CD8-positive, alpha-beta T cell (primary cell): ENCODE measurements at regions of chr11 and their contacts with region 1.

Region 1: GRCh38 chr11:10540923-10541560 is at the start of gene RNF141:
- DNase-seq: peak; percentile 89 to 98 (median 95)
- ATAC-seq: peak; percentile 98
- H3K4me3 ChIP-seq: peak within 1 kb of the TSS; percentile 78 to 83
- H3K4me3 Mint-ChIP-seq: peak within 1 kb of the TSS; percentile 91
- H3K27ac ChIP-seq: peak within 1 kb of the TSS; percentile 77 to 85
- H3K27ac Mint-ChIP-seq: peak within 1 kb of the TSS; percentile 89
- H3K4me1 ChIP-seq: peaks cover 13% of the 10 kb centered on the region
- H3K4me1 Mint-ChIP-seq: peaks cover 32% of the 10 kb centered on the region
- H3K27me3 ChIP-seq: no peaks in the 10 kb centered on the region
- H3K27me3 Mint-ChIP-seq: no peaks in the 10 kb centered on the region
- CTCF ChIP-seq: peak; percentile 85
- total RNA-seq, gene RNF141: 17.3 to 19.2 TPM

Region 2: DNA sequence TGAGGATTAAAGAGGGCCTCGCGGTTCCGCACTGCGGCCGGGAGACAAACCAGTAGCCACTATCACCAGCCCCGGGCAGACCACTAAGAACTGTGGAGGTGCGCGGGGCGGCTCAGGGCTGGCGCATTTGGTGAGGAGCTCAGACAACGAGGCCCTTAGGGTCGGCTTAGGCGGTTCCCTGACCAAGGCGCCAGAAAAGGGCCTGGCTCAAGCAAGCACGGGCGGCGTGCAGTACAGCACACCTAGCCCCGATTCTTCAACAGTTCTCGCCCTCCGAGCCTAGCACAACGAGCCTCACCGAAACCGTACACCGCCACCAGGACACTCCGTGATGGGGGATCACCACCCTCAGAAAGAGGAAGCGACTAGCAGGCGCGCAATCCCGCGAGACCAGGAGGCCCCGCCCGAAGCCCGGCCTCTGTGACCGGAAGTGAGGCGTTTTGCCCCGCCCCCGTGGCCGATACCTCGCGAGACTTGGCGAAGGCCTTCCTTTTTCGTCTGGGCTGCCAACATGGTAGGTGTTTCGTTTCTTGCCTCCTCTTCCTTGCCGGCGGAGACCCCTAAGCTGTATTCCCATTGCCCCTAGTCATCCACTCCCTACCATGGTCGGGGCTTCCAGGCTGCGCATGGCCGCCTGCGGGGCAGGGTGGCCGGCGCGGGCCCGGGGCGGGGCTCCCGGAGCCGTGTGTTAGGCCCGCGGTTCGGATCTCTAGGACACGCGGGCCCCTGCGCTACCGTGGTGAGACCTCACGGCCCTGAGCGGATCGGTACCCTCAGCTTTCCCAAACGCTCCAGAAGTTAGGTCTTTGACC is 1858.5 kb before region 1 on chr11 and contains the starts of genes RPL27A and TRIM66:
- CTCF ChIA-PET with region 1: no interaction called
- POLR2A ChIA-PET with region 1: no interaction called
- intact Hi-C with region 1: loop called in 1 of 2 experiments (anchors 5 kb)
- DNase-seq: peak; percentile 98 to 100 (median 99)
- ATAC-seq: peak; percentile 92
- H3K4me3 ChIP-seq: peak within 1 kb of the TSS; percentile 63 to 99
- H3K4me3 Mint-ChIP-seq: peak within 1 kb of the TSS; percentile 96
- H3K27ac ChIP-seq: peak within 1 kb of the TSS; percentile 82 to 92
- H3K27ac Mint-ChIP-seq: peak within 1 kb of the TSS; percentile 98
- H3K4me1 ChIP-seq: peaks cover 27% of the 10 kb centered on the region
- H3K4me1 Mint-ChIP-seq: peaks cover 48% of the 10 kb centered on the region
- H3K27me3 ChIP-seq: no peaks in the 10 kb centered on the region
- H3K27me3 Mint-ChIP-seq: no peaks in the 10 kb centered on the region
- CTCF ChIP-seq: no peak
- total RNA-seq, gene RPL27A: 1,595 to 1,676 TPM
- total RNA-seq, gene TRIM66: 8.6 to 9.1 TPM

Region 3: DNA sequence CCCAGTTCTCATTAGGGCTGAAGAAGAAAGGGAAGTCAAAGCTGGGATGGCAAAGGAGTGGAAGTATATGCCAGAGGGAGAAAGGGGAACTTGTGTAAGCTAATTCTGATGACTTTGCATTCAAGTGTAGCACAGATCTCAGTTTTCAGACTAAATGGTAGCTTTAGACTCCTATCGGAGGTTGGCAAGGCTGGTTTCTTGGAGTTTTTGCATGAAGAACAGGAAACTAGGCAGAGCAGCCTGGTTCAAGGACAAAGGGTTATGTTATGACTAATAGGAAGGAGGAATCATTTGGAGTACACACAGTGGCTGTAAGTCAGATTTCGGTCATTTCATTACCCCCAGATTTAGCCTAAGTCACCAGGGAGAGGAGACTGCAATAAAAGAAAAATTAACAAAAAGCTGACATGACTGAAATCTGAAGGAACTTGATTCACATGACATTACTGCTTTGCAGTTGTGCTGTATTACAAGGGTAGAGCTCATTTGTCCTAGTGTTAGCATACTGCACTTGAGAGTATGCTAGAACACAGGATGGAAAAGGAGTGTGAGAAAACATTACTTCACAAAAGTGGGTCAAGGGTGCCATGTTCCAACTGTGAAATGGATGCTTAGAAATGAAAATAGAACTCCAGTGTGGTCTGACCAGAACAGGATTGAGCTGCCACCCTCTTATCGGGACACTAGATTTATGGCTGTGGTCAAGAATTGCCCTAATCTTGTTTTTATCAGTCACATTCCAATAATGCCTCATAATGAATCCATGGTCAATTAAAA is 212.5 kb before region 1 on chr11:
- CTCF ChIA-PET with region 1: no interaction called
- POLR2A ChIA-PET with region 1: no interaction called
- intact Hi-C with region 1: no loop called
- DNase-seq: no peak
- ATAC-seq: no peak
- H3K4me3 ChIP-seq: no peak overlapping the region
- H3K4me3 Mint-ChIP-seq: no peak overlapping the region
- H3K27ac ChIP-seq: no peak overlapping the region
- H3K27ac Mint-ChIP-seq: no peak overlapping the region
- H3K4me1 ChIP-seq: no peaks in the 10 kb centered on the region
- H3K4me1 Mint-ChIP-seq: no peaks in the 10 kb centered on the region
- H3K27me3 ChIP-seq: peaks cover 0 to 5% of the 10 kb centered on the region in 2 experiments
- H3K27me3 Mint-ChIP-seq: peaks cover 13% of the 10 kb centered on the region
- CTCF ChIP-seq: no peak

Region 4: DNA sequence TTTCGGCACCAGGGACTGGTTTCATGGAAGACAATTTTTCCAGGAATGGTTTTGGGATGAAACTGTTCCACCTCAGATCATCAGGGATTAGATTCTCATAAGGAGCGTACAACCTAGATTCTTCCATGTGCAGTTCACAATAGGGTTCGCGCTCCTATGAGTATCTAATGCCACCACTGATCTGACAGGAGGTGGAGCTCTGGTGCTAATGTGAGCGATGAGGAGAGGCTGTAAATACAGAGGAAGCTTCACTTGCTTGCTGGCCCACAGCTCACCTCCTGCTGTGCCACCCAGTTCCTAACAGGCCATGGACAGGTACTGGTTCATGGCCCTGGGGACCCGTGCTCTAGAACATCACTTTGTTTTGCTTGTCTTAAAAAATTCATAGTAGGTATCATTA is 127.8 kb before region 1 on chr11:
- CTCF ChIA-PET with region 1: interaction called, 22 read pairs
- POLR2A ChIA-PET with region 1: interaction called, 5 read pairs
- intact Hi-C with region 1: loop called (anchors 2 kb)
- DNase-seq: peak in 8 of 9 experiments; percentile 20 to 81 (median 53)
- ATAC-seq: peak; percentile 93
- H3K4me3 ChIP-seq: no peak overlapping the region
- H3K4me3 Mint-ChIP-seq: no peak overlapping the region
- H3K27ac ChIP-seq: no peak overlapping the region
- H3K27ac Mint-ChIP-seq: no peak overlapping the region
- H3K4me1 ChIP-seq: peaks cover 29% of the 10 kb centered on the region
- H3K4me1 Mint-ChIP-seq: peaks cover 40% of the 10 kb centered on the region
- H3K27me3 ChIP-seq: no peaks in the 10 kb centered on the region
- H3K27me3 Mint-ChIP-seq: no peaks in the 10 kb centered on the region
- CTCF ChIP-seq: peak; percentile 51

Region 5: GRCh38 chr11:10450464-10451425 is 90.3 kb before region 1 on chr11:
- CTCF ChIA-PET with region 1: interaction called, 19 read pairs
- POLR2A ChIA-PET with region 1: interaction called, 11 read pairs
- intact Hi-C with region 1: loop called in 1 of 2 experiments (anchors 5 kb)
- DNase-seq: peak in 8 of 9 experiments; percentile 39 to 79 (median 58)
- ATAC-seq: peak; percentile 70
- H3K4me3 ChIP-seq: peak overlapping the region; percentile 47 to 59
- H3K4me3 Mint-ChIP-seq: peak overlapping the region; percentile 88
- H3K27ac ChIP-seq: peak overlapping the region; percentile 44 to 45
- H3K27ac Mint-ChIP-seq: peak overlapping the region; percentile 94
- H3K4me1 ChIP-seq: peaks cover 40% of the 10 kb centered on the region
- H3K4me1 Mint-ChIP-seq: peaks cover 62% of the 10 kb centered on the region
- H3K27me3 ChIP-seq: peaks cover 0 to 4% of the 10 kb centered on the region in 2 experiments
- H3K27me3 Mint-ChIP-seq: no peaks in the 10 kb centered on the region
- CTCF ChIP-seq: peak; percentile 52

Region 6: DNA sequence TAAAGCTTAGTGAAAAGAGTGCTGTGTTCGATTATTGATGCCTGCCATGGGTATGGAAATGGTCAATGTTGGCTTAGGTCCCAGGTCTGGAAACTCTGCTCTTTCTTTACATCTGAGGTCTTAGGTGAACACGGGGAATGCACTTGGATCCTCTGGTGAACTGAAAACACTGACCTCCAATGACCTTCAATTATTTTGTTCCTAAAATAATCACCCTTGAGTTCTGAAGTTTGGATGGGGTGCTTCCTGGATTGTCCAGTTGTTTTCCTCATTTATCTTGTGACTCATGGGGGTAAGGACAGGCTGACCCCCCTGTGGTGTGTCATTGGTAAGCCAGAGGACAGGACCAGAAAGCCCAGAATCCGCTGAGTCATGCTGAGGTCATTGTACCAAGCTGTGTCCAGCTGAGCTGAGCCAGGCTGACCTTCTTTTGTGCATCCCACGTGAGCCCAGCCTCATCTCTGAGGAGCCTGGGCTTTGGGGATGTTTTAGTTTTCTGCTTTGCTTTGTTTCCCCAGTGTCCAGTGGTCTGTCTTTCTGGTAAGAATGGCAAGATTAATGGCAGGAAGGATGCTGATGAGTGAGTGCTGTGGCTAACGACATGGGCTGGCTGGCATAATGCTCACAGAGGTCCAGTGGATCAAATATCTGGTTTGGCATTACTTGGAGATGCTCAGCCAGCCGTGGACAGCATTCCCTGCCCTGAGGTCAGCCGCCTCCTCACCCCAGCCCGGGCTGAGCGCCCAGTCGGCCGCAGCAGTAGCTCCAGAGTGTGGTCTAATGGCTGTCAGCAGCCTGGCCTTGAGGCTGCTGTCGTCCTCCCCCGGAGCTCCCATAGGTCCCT is 50.4 kb before region 1 on chr11:
- CTCF ChIA-PET with region 1: no interaction called
- POLR2A ChIA-PET with region 1: no interaction called
- intact Hi-C with region 1: loop called in 1 of 2 experiments (anchors 1 kb)
- DNase-seq: no peak
- ATAC-seq: no peak
- H3K4me3 ChIP-seq: no peak overlapping the region
- H3K4me3 Mint-ChIP-seq: no peak overlapping the region
- H3K27ac ChIP-seq: no peak overlapping the region
- H3K27ac Mint-ChIP-seq: peak overlapping the region; percentile 78
- H3K4me1 ChIP-seq: no peaks in the 10 kb centered on the region
- H3K4me1 Mint-ChIP-seq: peaks cover 9% of the 10 kb centered on the region
- H3K27me3 ChIP-seq: no peaks in the 10 kb centered on the region
- H3K27me3 Mint-ChIP-seq: no peaks in the 10 kb centered on the region
- CTCF ChIP-seq: no peak

Region 7: GRCh38 chr11:10735481-10736475 is 194.7 kb after region 1 on chr11:
- CTCF ChIA-PET with region 1: interaction called, 4 read pairs
- POLR2A ChIA-PET with region 1: no interaction called
- intact Hi-C with region 1: loop called (anchors 5 kb)
- DNase-seq: peak; percentile 73 to 91 (median 85)
- ATAC-seq: peak; percentile 99
- H3K4me3 ChIP-seq: peak overlapping the region; percentile 3 to 20
- H3K4me3 Mint-ChIP-seq: peak overlapping the region; percentile 56
- H3K27ac ChIP-seq: no peak overlapping the region
- H3K27ac Mint-ChIP-seq: no peak overlapping the region
- H3K4me1 ChIP-seq: peaks cover 9% of the 10 kb centered on the region
- H3K4me1 Mint-ChIP-seq: peaks cover 13% of the 10 kb centered on the region
- H3K27me3 ChIP-seq: no peaks in the 10 kb centered on the region
- H3K27me3 Mint-ChIP-seq: no peaks in the 10 kb centered on the region
- CTCF ChIP-seq: peak; percentile 96

Region 8: DNA sequence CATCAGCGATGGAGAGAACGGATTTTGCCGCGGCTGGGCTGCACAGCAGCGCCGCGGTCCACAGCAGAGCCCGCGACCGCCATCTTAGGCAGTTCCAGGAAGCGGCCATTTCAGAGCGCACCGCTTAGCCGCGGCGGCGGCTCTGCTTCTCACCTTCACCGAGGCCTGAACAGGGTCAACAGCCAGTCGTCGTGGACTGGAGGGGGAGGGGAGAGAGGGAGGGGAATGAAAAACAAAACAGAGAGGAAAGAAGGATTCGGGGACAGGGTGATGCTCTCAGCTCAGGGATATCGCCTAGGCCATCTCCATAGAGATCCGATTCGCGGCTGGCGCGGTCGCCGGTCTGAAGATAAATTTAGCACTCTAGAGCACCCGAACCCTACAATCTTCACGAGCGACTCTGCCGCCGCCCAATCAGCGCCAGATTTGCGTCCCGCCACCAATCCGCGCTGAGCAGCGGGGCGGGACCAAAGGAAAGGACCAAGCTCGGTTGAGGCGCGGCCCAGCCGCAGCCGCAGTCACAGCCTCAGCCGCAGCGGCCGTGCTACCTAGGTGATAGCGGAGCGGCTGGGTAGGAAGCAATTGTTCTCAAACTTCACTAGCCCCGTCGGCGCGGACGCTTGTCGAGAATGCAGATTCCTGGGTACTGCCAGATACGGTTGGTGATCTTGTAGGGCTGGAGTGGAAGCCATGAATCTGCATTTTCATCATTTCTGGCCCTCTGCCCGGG is 316.8 kb after region 1 on chr11 and contains the start of gene ZBED5:
- CTCF ChIA-PET with region 1: no interaction called
- POLR2A ChIA-PET with region 1: no interaction called
- intact Hi-C with region 1: loop called (anchors 2 to 5 kb)
- DNase-seq: peak; percentile 91 to 98 (median 94)
- ATAC-seq: peak; percentile 90
- H3K4me3 ChIP-seq: peak within 1 kb of the TSS; percentile 68 to 93
- H3K4me3 Mint-ChIP-seq: peak within 1 kb of the TSS; percentile 98
- H3K27ac ChIP-seq: peak within 1 kb of the TSS; percentile 91 to 92
- H3K27ac Mint-ChIP-seq: peak within 1 kb of the TSS; percentile 99
- H3K4me1 ChIP-seq: peaks cover 23% of the 10 kb centered on the region
- H3K4me1 Mint-ChIP-seq: peaks cover 51% of the 10 kb centered on the region
- H3K27me3 ChIP-seq: no peaks in the 10 kb centered on the region
- H3K27me3 Mint-ChIP-seq: no peaks in the 10 kb centered on the region
- CTCF ChIP-seq: no peak
- total RNA-seq, gene ZBED5: 57.5 to 59.2 TPM